ENCODE measurements at regions of chrX and their contacts with region 1.

Region 1: GRCh38 chrX:119638725-119639471 is 32.7 kb upstream of the NKRF start:
- DNase-seq: peak; percentile 81
- ATAC-seq: peak; percentile 84
- H3K4me3 ChIP-seq: no peak overlapping the region
- H3K27ac ChIP-seq: peak overlapping the region; percentile 67
- H3K4me1 ChIP-seq: peaks cover 61% of the 10 kb centered on the region
- H3K27me3 ChIP-seq: no peaks in the 10 kb centered on the region
- CTCF ChIP-seq: 0 out of 6 replicates have a peak, but pooled peaks of 1 of the 3 experiments have one; percentile 10
- EP300 ChIP-seq: no peak
- POLR2A ChIP-seq: no peak
- RAD21 ChIP-seq: no peak

Region 2: DNA sequence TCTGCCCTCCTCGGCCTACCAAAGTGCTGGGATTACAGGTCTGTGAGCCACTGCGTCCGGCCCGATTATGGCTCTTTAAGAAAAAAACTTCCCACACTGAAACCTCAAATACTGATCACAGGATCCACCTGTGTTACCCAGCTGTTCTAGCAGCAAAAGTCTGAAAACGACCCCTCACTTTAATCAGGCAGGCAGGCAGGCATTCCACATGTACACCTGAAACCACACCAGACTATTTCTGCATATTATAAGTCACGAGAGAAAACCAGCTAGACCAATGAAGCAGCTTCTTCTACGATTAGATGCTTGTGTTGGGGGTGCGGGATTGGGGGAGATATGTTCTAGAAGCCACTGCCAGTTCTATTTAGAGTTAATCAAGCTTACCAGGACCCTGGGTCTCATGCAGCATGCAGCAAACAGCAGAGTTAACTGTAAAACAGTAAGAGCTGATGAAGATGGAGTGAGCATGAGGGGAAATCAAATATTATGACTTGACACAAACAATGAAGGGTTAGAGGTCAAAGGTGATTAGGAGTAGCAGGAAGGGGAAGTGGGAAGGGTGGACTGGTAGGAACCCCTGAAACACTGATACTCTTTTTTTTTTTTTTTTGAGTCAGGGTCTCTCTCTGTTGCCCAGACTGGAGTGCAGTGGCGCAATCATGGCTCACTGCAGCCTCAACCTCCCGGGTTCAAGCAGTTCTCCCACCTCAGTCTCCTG is 13.8 kb before region 1 on chrX:
- CTCF ChIA-PET with region 1: interaction called, 9 read pairs
- POLR2A ChIA-PET with region 1: interaction called, 6 read pairs
- RAD21 ChIA-PET with region 1: interaction called, 99 read pairs
- SMC1A ChIA-PET with region 1: interaction called, 37 read pairs
- in situ Hi-C with region 1: no loop called
- intact Hi-C with region 1: no loop called
- DNase-seq: no peak
- ATAC-seq: no peak
- H3K4me3 ChIP-seq: no peak overlapping the region
- H3K27ac ChIP-seq: no peak overlapping the region
- H3K4me1 ChIP-seq: peaks cover 7% of the 10 kb centered on the region
- H3K27me3 ChIP-seq: no peaks in the 10 kb centered on the region
- CTCF ChIP-seq: no peak
- EP300 ChIP-seq: no peak
- POLR2A ChIP-seq: no peak
- RAD21 ChIP-seq: no peak

Region 3: DNA sequence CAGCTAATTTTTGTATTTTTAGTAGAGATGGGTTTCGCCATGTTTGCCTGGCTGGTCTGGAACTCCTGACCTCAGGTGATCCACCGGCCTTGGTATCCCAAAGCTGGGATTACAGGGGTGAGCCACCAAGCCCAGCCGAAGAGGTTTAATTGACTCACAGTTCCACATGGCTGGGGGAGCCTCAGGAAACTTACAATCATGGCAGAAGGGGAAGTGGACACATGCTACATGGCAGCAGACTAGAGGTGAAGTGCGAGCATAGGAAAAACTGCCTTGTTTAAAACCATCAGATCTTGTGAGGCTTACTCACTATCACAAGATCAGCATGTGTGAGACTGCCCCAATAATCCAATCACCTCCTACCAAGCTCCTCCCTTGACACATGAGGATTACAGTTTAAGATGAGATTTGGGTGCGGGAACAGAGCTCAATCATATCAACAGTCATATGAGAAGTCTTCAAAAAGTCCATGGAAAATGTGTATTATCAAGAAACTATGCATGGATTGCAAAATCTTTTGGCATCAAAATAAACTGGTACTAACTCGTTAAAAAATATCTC is 178.3 kb after region 1 on chrX:
- CTCF ChIA-PET with region 1: no interaction called
- POLR2A ChIA-PET with region 1: no interaction called
- RAD21 ChIA-PET with region 1: no interaction called
- SMC1A ChIA-PET with region 1: no interaction called
- in situ Hi-C with region 1: no loop called
- intact Hi-C with region 1: no loop called
- DNase-seq: no peak
- ATAC-seq: no peak
- H3K4me3 ChIP-seq: no peak overlapping the region
- H3K27ac ChIP-seq: no peak overlapping the region
- H3K4me1 ChIP-seq: no peaks in the 10 kb centered on the region
- H3K27me3 ChIP-seq: no peaks in the 10 kb centered on the region; a peak in 1 of 4 replicates
- CTCF ChIP-seq: no peak
- EP300 ChIP-seq: no peak
- POLR2A ChIP-seq: no peak
- RAD21 ChIP-seq: no peak